MCF 10A (cell line): ENCODE measurements at regions of chr5 and their contacts with region 1.

Region 1: GRCh38 chr5:135466178-135467050 is 14.3 kb upstream of the TIFAB start:
- DNase-seq: peak; percentile 78
- H3K4me3 Mint-ChIP-seq: no peak overlapping the region
- H3K27ac Mint-ChIP-seq: no peak overlapping the region
- H3K4me1 Mint-ChIP-seq: peaks cover 5% of the 10 kb centered on the region
- H3K27me3 Mint-ChIP-seq: peaks cover 12% of the 10 kb centered on the region
- CTCF ChIP-seq: peak; percentile 99

Region 2: DNA sequence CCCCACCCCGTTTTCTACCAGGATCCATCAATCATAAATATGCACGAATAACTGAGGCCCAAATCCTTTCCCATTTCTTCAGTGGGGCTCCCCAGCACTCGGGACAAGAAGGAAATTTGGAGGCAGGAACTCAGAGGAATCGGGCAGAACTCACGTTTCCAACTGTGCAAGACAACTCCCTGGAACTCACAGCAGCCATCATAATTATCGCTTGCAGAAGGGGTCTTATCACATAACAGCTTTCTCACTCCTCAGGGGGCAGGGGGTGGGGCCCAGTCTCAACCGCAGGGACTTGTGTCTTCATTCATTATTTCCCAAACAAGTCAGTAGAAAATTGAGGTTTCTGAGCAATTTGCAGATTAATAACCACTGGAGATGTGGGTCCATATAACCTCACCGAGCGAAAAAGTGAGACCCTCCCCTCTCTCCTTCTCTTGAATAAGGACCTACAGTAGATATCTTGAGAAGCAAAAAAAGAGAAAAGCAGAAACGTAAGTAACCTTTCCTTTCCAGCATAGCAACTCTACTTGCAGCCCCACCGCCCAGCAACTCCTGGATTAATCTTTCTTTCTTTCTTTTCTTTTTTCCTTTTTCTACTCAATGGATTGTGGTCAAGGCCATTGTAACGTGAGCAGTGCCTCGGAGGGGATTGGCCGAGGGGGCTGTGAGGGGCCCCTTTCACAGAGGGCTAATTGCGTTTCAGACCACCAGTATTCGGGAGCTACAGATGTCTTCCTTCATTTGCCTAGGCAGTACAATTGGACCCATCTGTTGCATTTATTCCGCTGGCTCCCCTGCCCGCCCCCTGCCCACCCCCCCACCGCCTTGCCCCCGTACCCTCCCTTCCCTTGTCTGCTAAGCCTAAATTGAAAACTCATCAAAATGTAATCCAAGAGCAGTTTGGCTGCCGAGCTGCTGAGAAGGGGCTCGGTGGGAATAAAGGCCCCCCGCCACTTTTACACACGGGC is 10.5 kb after region 1 on chr5:
- CTCF ChIA-PET with region 1: interaction called, 114 read pairs
- POLR2A ChIA-PET with region 1: no interaction called
- intact Hi-C with region 1: no loop called
- DNase-seq: no peak
- H3K4me3 Mint-ChIP-seq: no peak overlapping the region
- H3K27ac Mint-ChIP-seq: no peak overlapping the region
- H3K4me1 Mint-ChIP-seq: no peaks in the 10 kb centered on the region
- H3K27me3 Mint-ChIP-seq: no peaks in the 10 kb centered on the region
- CTCF ChIP-seq: no peak

Region 3: DNA sequence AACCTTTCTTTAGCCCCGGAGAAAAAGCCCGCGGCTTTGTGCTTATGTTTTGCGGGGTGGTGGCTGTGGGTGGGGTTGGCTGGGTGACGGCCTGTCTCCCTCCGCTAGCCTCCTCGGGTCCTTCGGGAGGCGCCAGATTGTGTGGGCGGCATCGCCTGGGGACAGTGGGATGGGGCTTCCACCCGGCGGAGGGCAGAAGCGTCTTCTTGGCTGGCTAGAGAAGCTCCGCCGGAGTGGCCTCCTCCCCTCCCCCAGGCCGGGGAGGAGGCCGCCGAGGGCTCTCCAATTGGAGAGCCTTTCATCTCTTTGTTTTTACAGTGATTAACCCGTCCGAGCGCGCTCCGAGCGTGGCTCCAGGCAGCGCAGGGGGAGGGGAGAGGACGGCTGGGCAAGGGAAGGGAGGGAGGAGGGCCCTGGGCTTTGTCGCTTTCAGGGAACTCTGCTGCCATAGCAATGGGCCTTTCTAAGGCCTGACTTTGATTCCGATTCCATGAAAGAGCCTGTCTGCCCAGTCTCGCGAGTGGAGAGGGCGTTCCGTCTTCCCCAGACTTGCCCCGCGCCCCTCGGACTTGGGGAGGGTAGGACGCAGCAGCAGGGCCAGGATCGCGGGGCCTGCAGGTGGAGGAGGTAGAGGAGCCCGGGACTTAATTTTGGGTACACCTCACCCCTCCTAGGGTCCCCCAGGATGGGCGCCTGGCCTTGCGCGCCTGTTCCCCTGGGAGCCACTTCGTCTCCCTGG is 22.5 kb after region 1 on chr5:
- CTCF ChIA-PET with region 1: interaction called, 96 read pairs
- POLR2A ChIA-PET with region 1: interaction called, 6 read pairs
- intact Hi-C with region 1: loop called (anchors 2 kb)
- DNase-seq: peak; percentile 89
- H3K4me3 Mint-ChIP-seq: peak overlapping the region; percentile 62
- H3K27ac Mint-ChIP-seq: peak overlapping the region; percentile 52
- H3K4me1 Mint-ChIP-seq: peaks cover 34% of the 10 kb centered on the region
- H3K27me3 Mint-ChIP-seq: no peaks in the 10 kb centered on the region
- CTCF ChIP-seq: no peak

Region 4: GRCh38 chr5:135508482-135509005 is 42.1 kb after region 1 on chr5:
- CTCF ChIA-PET with region 1: interaction called, 37 read pairs
- POLR2A ChIA-PET with region 1: no interaction called
- intact Hi-C with region 1: no loop called
- DNase-seq: no peak
- H3K4me3 Mint-ChIP-seq: no peak overlapping the region
- H3K27ac Mint-ChIP-seq: no peak overlapping the region
- H3K4me1 Mint-ChIP-seq: peaks cover 9% of the 10 kb centered on the region
- H3K27me3 Mint-ChIP-seq: no peaks in the 10 kb centered on the region
- CTCF ChIP-seq: no peak

Region 5: GRCh38 chr5:135543485-135544304 is 77.3 kb after region 1 on chr5:
- CTCF ChIA-PET with region 1: interaction called, 2,166 read pairs
- POLR2A ChIA-PET with region 1: interaction called, 88 read pairs
- intact Hi-C with region 1: no loop called
- DNase-seq: no peak
- H3K4me3 Mint-ChIP-seq: no peak overlapping the region
- H3K27ac Mint-ChIP-seq: no peak overlapping the region
- H3K4me1 Mint-ChIP-seq: no peaks in the 10 kb centered on the region
- H3K27me3 Mint-ChIP-seq: no peaks in the 10 kb centered on the region
- CTCF ChIP-seq: no peak

Region 6: DNA sequence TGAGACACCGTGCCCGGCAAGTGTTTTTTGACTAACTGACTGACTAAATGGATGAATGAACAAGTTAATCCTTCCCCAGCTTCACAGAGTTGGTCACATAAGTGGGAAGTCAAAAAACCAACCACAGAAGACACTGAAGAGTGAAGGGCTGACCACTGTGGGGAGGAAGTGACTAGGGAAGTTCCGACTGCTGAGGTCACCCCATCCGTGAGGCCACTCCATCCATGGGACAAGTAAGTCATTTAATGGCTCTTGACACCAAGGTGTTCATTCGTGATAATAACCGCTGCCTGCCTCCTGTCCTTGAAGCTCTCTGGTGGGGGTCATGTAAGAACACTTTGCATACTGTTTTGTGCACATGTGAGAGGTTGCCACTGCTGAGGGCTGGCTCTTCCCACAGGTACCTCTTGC is 134.6 kb after region 1 on chr5:
- CTCF ChIA-PET with region 1: no interaction called
- POLR2A ChIA-PET with region 1: no interaction called
- intact Hi-C with region 1: no loop called
- DNase-seq: no peak
- H3K4me3 Mint-ChIP-seq: no peak overlapping the region
- H3K27ac Mint-ChIP-seq: no peak overlapping the region
- H3K4me1 Mint-ChIP-seq: no peaks in the 10 kb centered on the region
- H3K27me3 Mint-ChIP-seq: peaks cover 31% of the 10 kb centered on the region
- CTCF ChIP-seq: no peak

Region 7: DNA sequence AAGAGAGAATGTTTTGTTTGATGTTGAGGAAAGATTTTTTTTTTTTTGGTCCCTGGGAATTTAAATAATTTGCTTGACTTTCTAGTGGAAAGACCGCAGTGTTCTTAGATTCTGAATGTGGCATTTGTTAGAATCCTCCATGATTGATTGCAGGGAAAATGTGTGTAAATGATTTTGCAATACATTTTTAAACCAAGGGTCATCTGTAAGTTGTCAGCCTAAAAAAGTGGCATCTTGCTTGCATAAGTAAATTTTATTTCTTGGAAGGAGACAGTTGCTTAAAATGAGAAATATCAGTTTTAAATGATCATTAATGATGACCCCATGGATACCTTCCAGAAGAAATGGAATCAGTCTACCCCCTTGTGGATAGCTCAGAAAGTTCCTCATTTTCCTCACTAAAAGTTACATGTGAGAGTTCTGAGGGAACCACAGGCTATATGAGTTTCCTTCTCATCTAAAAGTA is 262.9 kb after region 1 on chr5:
- CTCF ChIA-PET with region 1: interaction called, 32 read pairs
- POLR2A ChIA-PET with region 1: no interaction called
- intact Hi-C with region 1: loop called (anchors 1 kb)
- DNase-seq: peak; percentile 48
- H3K4me3 Mint-ChIP-seq: no peak overlapping the region
- H3K27ac Mint-ChIP-seq: no peak overlapping the region
- H3K4me1 Mint-ChIP-seq: no peaks in the 10 kb centered on the region
- H3K27me3 Mint-ChIP-seq: no peaks in the 10 kb centered on the region
- CTCF ChIP-seq: peak; percentile 53

Region 8: DNA sequence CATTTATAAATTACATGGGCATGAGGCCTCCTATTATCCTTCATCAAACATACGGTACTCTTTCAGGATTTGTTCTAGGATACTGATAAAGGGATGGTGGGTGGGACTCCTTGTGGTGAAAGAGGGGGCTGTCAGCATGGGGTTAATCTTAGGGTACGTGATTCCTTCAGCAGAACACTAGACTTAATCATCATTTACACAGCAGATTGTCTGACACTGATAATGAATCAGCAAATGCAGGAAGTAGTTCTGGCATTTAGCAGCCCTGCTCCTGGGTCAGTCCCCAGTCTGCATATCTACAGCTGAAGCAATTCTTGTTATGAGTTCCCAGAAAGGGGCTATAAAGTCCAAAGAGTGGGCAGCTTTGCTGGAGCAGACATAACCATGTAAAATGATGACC is 1648.1 kb after region 1 on chr5:
- CTCF ChIA-PET with region 1: no interaction called
- POLR2A ChIA-PET with region 1: no interaction called
- intact Hi-C with region 1: no loop called
- DNase-seq: no peak
- H3K4me3 Mint-ChIP-seq: no peak overlapping the region
- H3K27ac Mint-ChIP-seq: no peak overlapping the region
- H3K4me1 Mint-ChIP-seq: no peaks in the 10 kb centered on the region
- H3K27me3 Mint-ChIP-seq: no peaks in the 10 kb centered on the region
- CTCF ChIP-seq: no peak